ENCODE measurements at regions of chr2 and their contacts with region 1.

Region 1: GRCh38 chr2:40554668-40555285 is 102.9 kb upstream of the SLC8A1 start:
- DNase-seq: peak; percentile 18 to 76
- ATAC-seq: peak; percentile 52 to 88 (median 81)
- H3K4me3 ChIP-seq: peak overlapping the region in 1 of 10 donors; percentile 4
- H3K27ac ChIP-seq: peak overlapping the region in 4 of 10 donors; percentile 30 to 51 (median 42)
- H3K4me1 ChIP-seq: peaks cover 0 to 14% (median 4%) of the 10 kb centered on the region in 9 donors
- H3K27me3 ChIP-seq: no peaks in the 10 kb centered on the region
- CTCF ChIP-seq: peak; percentile 58 to 96 (median 89)

Region 2: DNA sequence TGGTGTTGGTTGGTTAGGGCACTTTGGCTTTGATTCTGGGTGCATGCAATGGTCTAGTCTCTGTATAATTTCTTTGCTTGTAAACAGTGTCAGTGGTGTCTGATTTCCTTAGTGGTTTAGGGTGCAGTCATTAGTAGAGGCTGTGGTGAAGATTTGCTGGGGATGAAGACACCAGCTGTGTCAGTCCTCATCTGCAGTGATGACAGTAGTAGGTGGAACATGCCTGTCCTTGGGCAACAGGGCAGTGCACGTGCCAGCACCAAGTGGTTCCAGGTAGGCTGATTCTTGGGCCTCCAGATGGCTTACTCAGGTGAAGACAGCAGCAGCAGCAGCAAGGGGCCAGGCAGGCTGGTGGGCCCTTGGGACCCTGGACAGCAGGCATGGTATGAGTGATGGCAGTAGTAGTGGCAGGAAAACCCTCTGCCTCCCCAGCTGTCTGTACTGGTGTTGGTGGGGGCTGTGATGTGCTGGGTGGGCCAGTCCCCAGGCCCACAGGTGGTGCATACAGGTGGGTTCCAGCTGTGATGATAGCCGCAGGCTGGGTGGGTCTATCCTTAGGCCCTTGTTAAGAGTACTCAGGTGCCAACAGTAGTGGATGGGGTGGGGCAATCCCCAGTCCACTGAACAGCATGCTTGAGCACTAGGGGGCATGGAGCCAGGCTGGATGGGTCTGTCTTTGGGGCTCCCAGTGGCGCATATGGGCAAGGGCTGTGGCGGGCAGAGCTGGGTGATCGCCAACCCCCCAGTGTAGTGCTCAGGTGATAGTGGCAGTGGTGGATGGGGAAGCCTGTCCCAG is 635.1 kb before region 1 on chr2:
- intact Hi-C with region 1: loop called in 6 of 10 experiments (anchors 2 to 5 kb)
- DNase-seq: no peak
- ATAC-seq: peak in 1 of 8 donors; percentile 50
- H3K4me3 ChIP-seq: no peak overlapping the region
- H3K27ac ChIP-seq: no peak overlapping the region
- H3K4me1 ChIP-seq: peaks cover 0 to 6% (median 0%) of the 10 kb centered on the region in 9 donors
- H3K27me3 ChIP-seq: no peaks in the 10 kb centered on the region
- CTCF ChIP-seq: no peak

Region 3: GRCh38 chr2:40212804-40213470 is 341.8 kb before region 1 on chr2:
- intact Hi-C with region 1: loop called in 4 of 10 experiments (anchors 5 to 10 kb)
- DNase-seq: no peak
- ATAC-seq: peak in 7 of 8 donors; percentile 42 to 78 (median 68)
- H3K4me3 ChIP-seq: no peak overlapping the region
- H3K27ac ChIP-seq: peak overlapping the region in 1 of 10 donors; percentile 6
- H3K4me1 ChIP-seq: peaks cover 0 to 26% (median 11%) of the 10 kb centered on the region in 9 donors
- H3K27me3 ChIP-seq: no peaks in the 10 kb centered on the region
- CTCF ChIP-seq: peak in 7 of 9 donors; percentile 42 to 62 (median 55)

Region 4: DNA sequence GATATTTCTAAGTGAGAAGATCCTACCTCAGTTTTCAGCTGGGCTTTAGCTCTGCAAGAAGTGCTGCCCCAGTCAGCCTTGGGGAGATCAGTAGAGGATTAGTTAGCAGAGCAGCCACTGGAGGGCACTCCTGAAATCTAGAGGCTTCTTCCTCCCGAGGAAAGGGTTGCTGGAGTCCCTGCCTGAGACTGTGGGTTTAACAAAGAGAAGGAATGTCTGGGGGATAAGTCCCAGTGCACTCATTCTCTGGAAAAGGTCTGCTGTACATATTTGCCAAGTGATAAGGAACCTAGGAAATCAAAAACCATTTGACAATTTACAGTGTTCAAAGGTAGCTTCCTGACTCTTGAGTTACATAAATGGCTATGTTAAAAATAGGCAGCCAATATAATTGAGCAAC is 310.1 kb before region 1 on chr2:
- intact Hi-C with region 1: loop called in 1 of 10 experiments (anchors 10 kb)
- DNase-seq: peak; percentile 27 to 65
- ATAC-seq: peak; percentile 42 to 81 (median 66)
- H3K4me3 ChIP-seq: no peak overlapping the region
- H3K27ac ChIP-seq: peak overlapping the region in 8 of 10 donors; percentile 17 to 82 (median 56)
- H3K4me1 ChIP-seq: peaks cover 13 to 91% (median 44%) of the 10 kb centered on the region in 9 donors
- H3K27me3 ChIP-seq: no peaks in the 10 kb centered on the region
- CTCF ChIP-seq: peak in 8 of 9 donors; percentile 19 to 74 (median 58)

Region 5: GRCh38 chr2:40488101-40488601 is 66.6 kb before region 1 on chr2:
- intact Hi-C with region 1: loop called in 1 of 10 experiments (anchors 10 kb)
- DNase-seq: no peak
- ATAC-seq: peak in 7 of 8 donors; percentile 24 to 59 (median 49)
- H3K4me3 ChIP-seq: peak overlapping the region in 8 of 10 donors; percentile 31 to 62 (median 46)
- H3K27ac ChIP-seq: peak overlapping the region in 9 of 10 donors; percentile 23 to 85 (median 75)
- H3K4me1 ChIP-seq: peaks cover 7 to 59% (median 37%) of the 10 kb centered on the region in 9 donors
- H3K27me3 ChIP-seq: no peaks in the 10 kb centered on the region
- CTCF ChIP-seq: peak; percentile 16 to 66 (median 51)

Region 6: DNA sequence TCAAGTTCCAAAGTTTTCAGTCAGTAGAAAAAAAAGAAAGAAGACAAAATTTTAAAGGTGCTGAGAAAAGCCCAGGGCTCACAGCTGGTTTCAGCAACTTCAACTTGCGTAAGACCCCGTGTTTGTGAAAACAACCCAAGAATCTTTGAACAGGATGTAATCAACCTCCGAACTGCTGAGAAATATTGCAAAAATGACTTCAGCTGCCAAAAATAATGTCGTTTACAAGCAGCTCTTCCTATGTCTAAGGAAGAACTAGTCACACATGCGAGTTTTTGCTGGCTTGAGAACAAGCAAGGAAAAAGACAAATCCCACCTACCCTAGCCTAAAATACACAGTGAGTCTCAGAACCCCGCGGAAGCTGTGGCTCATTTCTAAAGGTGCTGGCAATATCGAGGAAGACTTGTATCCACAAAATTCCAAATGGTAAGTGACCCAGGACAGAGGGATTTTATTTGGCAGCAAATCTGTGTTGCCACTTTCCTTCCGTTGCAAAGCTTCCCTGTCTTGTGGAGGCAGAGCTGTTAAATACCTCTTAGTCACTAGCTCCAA is 43.0 kb before region 1 on chr2:
- intact Hi-C with region 1: loop called in 4 of 10 experiments (anchors 2 to 5 kb)
- DNase-seq: peak in 1 of 2 donors; percentile 36
- ATAC-seq: peak; percentile 15 to 68 (median 50)
- H3K4me3 ChIP-seq: peak overlapping the region; percentile 22 to 65 (median 53)
- H3K27ac ChIP-seq: peak overlapping the region; percentile 61 to 96 (median 90)
- H3K4me1 ChIP-seq: peaks cover 0 to 40% (median 18%) of the 10 kb centered on the region in 9 donors
- H3K27me3 ChIP-seq: no peaks in the 10 kb centered on the region
- CTCF ChIP-seq: no peak

Region 7: DNA sequence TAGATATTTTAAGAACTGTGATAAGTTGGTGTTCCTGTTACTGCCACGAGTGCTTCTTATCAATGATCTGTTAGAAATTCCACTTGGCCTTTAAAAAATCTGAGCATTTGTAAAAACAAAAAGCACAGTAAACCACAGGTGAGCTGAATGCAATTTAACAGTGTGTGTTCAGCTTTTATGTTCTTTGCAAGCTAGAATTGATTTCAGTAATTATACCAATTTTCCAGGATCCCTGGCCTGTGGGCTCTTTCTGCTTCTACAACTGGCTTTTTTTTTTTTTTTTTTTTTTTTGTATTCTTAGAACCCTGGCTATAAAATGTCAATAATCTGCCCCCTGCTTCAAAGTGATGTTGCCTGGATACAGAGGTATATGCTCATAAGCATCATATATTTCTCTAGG is 445.6 kb after region 1 on chr2:
- intact Hi-C with region 1: no loop called
- DNase-seq: no peak
- ATAC-seq: no peak
- H3K4me3 ChIP-seq: no peak overlapping the region
- H3K27ac ChIP-seq: no peak overlapping the region
- H3K4me1 ChIP-seq: no peaks in the 10 kb centered on the region
- H3K27me3 ChIP-seq: no peaks in the 10 kb centered on the region
- CTCF ChIP-seq: no peak

Measured in heart right ventricle (tissue), 16 donors.